MCF 10A (cell line): ENCODE measurements at regions of chr22 and their contacts with region 1.

Region 1: GRCh38 chr22:30754971-30755756 is 60.5 kb downstream of the OSBP2 start:
- DNase-seq: peak; percentile 81
- H3K4me3 Mint-ChIP-seq: no peak overlapping the region
- H3K27ac Mint-ChIP-seq: no peak overlapping the region
- H3K4me1 Mint-ChIP-seq: peaks cover 5% of the 10 kb centered on the region
- H3K27me3 Mint-ChIP-seq: no peaks in the 10 kb centered on the region
- CTCF ChIP-seq: peak; percentile 70

Region 2: DNA sequence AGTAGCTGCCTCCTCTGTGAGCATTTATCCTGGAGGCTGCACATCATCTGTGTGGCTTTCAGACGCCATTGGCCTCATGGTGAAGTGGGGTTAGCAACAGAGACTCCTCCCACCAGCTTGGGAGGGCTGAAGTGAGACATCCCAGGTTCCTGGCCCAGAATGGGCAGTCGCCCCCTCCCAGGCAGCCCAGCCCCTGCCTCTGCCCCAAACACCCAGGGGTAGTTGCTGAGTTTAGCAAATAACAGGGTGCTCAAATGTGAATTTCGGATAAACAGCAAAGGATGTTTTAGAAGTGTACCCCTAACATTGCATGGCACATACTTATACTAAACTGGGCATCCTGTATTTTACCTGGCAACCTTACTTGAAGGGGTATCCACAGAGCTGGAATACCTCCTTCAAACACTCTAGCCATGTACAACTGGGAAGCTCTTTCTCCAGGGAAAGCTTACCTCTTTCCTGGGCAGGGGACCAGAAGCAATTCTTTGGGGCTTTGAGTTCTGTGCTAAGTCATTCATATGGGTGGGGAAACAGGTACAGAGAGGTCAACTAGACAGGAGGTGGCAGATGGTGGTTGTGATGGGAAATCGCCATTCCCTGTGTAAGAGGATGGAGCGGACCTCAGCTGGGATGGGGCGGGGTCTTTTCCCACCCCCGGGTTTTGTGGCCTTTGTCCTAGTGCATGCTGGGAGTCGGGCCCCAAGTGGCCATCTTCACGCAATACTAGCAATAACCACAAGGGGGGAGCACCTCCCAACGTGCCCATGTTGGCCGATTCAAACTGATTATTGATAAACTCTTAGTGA is 310.3 kb before region 1 on chr22:
- CTCF ChIA-PET with region 1: interaction called, 27 read pairs
- POLR2A ChIA-PET with region 1: no interaction called
- intact Hi-C with region 1: loop called (anchors 1 kb)
- DNase-seq: peak; percentile 69
- H3K4me3 Mint-ChIP-seq: no peak overlapping the region
- H3K27ac Mint-ChIP-seq: no peak overlapping the region
- H3K4me1 Mint-ChIP-seq: peaks cover 6% of the 10 kb centered on the region
- H3K27me3 Mint-ChIP-seq: no peaks in the 10 kb centered on the region
- CTCF ChIP-seq: peak; percentile 70

Region 3: DNA sequence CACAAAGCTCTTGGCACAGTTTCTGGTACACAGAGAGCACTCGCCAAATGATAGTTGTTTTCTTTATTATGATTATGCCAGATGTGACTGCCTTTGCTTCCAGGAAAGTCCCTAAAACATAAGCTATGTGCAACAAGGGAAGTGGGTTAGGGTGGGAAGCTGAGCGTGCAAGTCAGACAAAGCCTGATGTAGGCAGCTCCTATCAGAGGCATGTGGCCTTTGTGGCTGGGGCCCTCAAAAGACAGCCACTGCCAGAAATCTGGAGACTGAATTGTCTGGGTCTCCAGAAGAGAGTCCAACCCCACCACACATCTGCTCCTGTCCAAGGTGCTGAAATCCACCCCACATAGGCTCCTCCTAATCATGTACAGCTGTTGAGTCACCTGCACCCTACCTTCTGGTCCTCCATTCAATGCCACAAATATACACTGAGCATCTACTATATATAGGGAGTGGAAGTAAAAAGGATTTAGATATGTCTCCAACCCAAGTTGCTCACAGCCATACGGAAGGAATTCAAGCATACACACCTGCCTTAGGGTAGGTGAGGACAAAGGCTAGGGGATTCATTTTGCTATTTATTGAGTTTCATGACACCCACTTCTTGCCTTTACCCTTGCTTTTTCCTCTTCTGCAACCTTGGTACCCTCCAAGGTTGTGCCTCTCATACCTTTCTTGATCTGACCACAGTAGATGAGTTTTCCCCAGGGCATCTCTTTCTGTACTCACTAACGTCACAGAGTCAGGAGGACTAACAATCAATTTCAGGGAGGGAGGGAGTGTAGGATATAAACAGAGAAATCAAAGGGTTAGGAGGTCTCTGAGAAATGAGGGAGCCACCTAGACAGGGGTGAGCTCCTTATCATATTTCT is 295.7 kb before region 1 on chr22:
- CTCF ChIA-PET with region 1: no interaction called
- POLR2A ChIA-PET with region 1: no interaction called
- intact Hi-C with region 1: no loop called
- DNase-seq: peak; percentile 55
- H3K4me3 Mint-ChIP-seq: no peak overlapping the region
- H3K27ac Mint-ChIP-seq: no peak overlapping the region
- H3K4me1 Mint-ChIP-seq: no peaks in the 10 kb centered on the region
- H3K27me3 Mint-ChIP-seq: peaks cover 11% of the 10 kb centered on the region
- CTCF ChIP-seq: no peak

Region 4: GRCh38 chr22:30628491-30628890 is 126.7 kb before region 1 on chr22:
- CTCF ChIA-PET with region 1: interaction called, 191 read pairs
- POLR2A ChIA-PET with region 1: interaction called, 21 read pairs
- intact Hi-C with region 1: no loop called
- DNase-seq: no peak
- H3K4me3 Mint-ChIP-seq: no peak overlapping the region
- H3K27ac Mint-ChIP-seq: no peak overlapping the region
- H3K4me1 Mint-ChIP-seq: no peaks in the 10 kb centered on the region
- H3K27me3 Mint-ChIP-seq: no peaks in the 10 kb centered on the region
- CTCF ChIP-seq: no peak

Region 5: GRCh38 chr22:30643055-30643875 is 111.9 kb before region 1 on chr22:
- CTCF ChIA-PET with region 1: interaction called, 191 read pairs
- POLR2A ChIA-PET with region 1: no interaction called
- intact Hi-C with region 1: no loop called
- DNase-seq: no peak
- H3K4me3 Mint-ChIP-seq: no peak overlapping the region
- H3K27ac Mint-ChIP-seq: no peak overlapping the region
- H3K4me1 Mint-ChIP-seq: no peaks in the 10 kb centered on the region
- H3K27me3 Mint-ChIP-seq: no peaks in the 10 kb centered on the region
- CTCF ChIP-seq: no peak

Region 6: DNA sequence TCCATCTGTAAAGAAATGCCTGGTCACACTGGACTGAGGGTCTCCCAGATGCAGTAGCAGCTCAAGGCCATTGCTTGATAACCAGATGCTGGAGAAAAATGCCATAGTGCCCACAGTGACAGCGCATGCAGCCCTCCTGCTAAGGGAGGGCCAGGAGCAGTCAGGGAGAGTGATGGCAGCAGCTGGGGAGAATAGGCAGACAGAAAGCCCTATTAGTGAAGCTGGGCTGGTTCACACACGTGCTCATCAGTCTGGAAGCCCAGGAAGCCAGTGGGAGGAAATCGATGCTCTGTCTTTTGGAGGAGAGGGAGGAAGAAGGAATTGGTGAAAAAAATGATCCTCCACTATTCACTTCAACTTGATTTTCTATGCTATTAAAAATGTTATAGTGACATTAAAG is 22.4 kb after region 1 on chr22:
- CTCF ChIA-PET with region 1: no interaction called
- POLR2A ChIA-PET with region 1: no interaction called
- intact Hi-C with region 1: no loop called
- DNase-seq: no peak
- H3K4me3 Mint-ChIP-seq: no peak overlapping the region
- H3K27ac Mint-ChIP-seq: no peak overlapping the region
- H3K4me1 Mint-ChIP-seq: peaks cover 6% of the 10 kb centered on the region
- H3K27me3 Mint-ChIP-seq: no peaks in the 10 kb centered on the region
- CTCF ChIP-seq: no peak

Region 7: GRCh38 chr22:30802202-30803166 is 47.3 kb after region 1 on chr22:
- CTCF ChIA-PET with region 1: interaction called, 10 read pairs
- POLR2A ChIA-PET with region 1: no interaction called
- intact Hi-C with region 1: no loop called
- DNase-seq: peak; percentile 91
- H3K4me3 Mint-ChIP-seq: peak overlapping the region; percentile 59
- H3K27ac Mint-ChIP-seq: no peak overlapping the region
- H3K4me1 Mint-ChIP-seq: peaks cover 42% of the 10 kb centered on the region
- H3K27me3 Mint-ChIP-seq: peaks cover 16% of the 10 kb centered on the region
- CTCF ChIP-seq: no peak